MCF 10A (cell line): ENCODE measurements at regions of chr6 and their contacts with region 1.

Region 1: GRCh38 chr6:5302995-5303622 is 41.8 kb downstream of the FARS2 start:
- DNase-seq: peak; percentile 78
- H3K4me3 Mint-ChIP-seq: no peak overlapping the region
- H3K27ac Mint-ChIP-seq: no peak overlapping the region
- H3K4me1 Mint-ChIP-seq: peaks cover 13% of the 10 kb centered on the region
- H3K27me3 Mint-ChIP-seq: no peaks in the 10 kb centered on the region
- CTCF ChIP-seq: peak; percentile 74

Region 2: GRCh38 chr6:4941782-4942672 is 361.1 kb before region 1 on chr6:
- CTCF ChIA-PET with region 1: no interaction called
- POLR2A ChIA-PET with region 1: no interaction called
- intact Hi-C with region 1: no loop called
- DNase-seq: peak; percentile 99
- H3K4me3 Mint-ChIP-seq: no peak overlapping the region
- H3K27ac Mint-ChIP-seq: no peak overlapping the region
- H3K4me1 Mint-ChIP-seq: peaks cover 28% of the 10 kb centered on the region
- H3K27me3 Mint-ChIP-seq: no peaks in the 10 kb centered on the region
- CTCF ChIP-seq: no peak

Region 3: DNA sequence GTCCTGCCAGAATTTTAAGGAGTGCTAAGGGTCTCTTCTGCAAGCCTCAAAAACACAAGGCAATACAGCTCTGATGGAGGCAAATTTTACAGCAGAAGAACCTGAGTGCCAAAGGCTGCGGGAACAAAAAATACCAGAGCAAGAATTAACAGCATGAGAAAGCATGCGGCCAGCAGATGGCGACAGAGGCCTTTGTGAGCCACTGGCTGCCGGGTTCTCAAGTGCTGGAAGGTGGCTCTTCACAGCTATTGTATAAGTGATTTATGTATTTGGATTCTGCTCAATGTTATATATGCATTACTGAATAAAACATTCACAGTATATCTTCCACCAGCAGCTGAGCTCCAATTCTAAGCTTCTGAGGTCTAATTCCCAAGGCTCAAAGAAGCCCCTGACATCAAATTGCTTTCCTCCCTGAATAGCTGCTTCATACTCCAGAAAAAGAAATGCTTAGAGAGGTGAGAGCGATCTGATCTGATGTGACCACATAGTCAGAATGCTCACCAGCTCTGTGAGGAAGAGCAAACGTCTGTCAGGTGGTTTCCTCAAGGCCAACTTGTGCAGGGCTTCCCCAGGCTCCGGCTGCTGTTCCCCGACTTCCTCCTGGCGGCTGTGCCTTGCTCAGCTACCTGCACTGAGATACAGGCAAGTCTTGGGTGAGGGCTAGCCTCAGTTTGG is 159.3 kb before region 1 on chr6:
- CTCF ChIA-PET with region 1: interaction called, 80 read pairs
- POLR2A ChIA-PET with region 1: interaction called, 9 read pairs
- intact Hi-C with region 1: loop called (anchors 1 kb)
- DNase-seq: peak; percentile 80
- H3K4me3 Mint-ChIP-seq: no peak overlapping the region
- H3K27ac Mint-ChIP-seq: no peak overlapping the region
- H3K4me1 Mint-ChIP-seq: no peaks in the 10 kb centered on the region
- H3K27me3 Mint-ChIP-seq: no peaks in the 10 kb centered on the region
- CTCF ChIP-seq: peak; percentile 92

Region 4: DNA sequence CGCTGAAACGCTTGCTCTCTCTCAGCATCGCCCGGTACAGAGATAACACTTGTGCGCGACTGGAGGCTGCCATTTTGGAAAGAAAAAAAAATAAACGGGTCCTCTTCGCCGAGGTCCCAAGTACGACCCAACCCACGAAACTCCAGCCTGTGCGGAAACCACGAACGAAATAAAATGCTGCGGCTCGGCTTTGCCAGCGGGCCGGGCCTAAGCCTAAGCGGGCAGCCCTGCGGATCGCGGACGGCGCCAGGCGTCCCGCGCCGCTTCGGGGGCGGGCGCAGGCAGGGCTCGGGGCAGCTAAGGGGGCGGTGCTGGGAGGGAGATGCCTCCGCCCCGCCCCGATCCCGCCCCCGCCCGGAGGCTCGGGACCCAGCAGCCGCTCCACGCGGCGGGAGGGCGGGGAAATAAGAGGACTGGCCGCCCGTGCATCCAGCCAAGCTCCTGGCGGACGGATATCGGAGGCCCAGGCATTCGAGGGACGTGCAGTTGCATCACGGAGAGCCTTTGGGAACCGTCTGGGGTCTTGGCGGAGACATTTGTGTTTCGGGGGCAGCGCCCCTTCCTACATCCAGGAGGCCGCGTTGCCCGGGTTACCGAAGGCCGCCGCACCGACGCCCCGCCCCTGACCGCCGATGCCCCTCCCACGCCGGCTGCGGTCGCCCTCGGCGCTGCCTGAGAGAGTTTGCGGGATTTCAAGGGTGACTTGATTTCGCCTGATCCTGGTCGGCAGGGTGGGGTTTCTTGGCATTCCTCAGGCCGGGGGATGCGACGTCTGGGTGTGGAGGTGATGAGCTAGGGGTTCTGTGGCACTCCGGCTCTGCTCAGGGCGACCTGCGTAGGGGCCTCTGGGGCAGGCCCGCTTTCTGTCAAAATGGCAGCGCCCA is 42.2 kb before region 1 on chr6 and contains the starts of genes FARS2 and LYRM4:
- CTCF ChIA-PET with region 1: interaction called, 15 read pairs
- POLR2A ChIA-PET with region 1: interaction called, 6 read pairs
- intact Hi-C with region 1: loop called (anchors 2 kb)
- DNase-seq: peak; percentile 93
- H3K4me3 Mint-ChIP-seq: peak within 1 kb of the TSS; percentile 81
- H3K27ac Mint-ChIP-seq: peak within 1 kb of the TSS; percentile 99
- H3K4me1 Mint-ChIP-seq: peaks cover 12% of the 10 kb centered on the region
- H3K27me3 Mint-ChIP-seq: no peaks in the 10 kb centered on the region
- CTCF ChIP-seq: no peak
- total RNA-seq, gene FARS2: 13.0 and 18.2 TPM in 2 replicates
- total RNA-seq, gene LYRM4: 31.6 and 36.1 TPM in 2 replicates

Region 5: GRCh38 chr6:5287205-5287965 is 15.7 kb before region 1 on chr6:
- CTCF ChIA-PET with region 1: interaction called, 15 read pairs
- POLR2A ChIA-PET with region 1: interaction called, 10 read pairs
- intact Hi-C with region 1: no loop called
- DNase-seq: peak; percentile 78
- H3K4me3 Mint-ChIP-seq: peak overlapping the region; percentile 35
- H3K27ac Mint-ChIP-seq: peak overlapping the region; percentile 84
- H3K4me1 Mint-ChIP-seq: peaks cover 15% of the 10 kb centered on the region
- H3K27me3 Mint-ChIP-seq: no peaks in the 10 kb centered on the region
- CTCF ChIP-seq: no peak